ENCODE measurements at regions of chr2 and their contacts with region 1.

Region 1: GRCh38 chr2:54106631-54107454 is 8.6 kb upstream of the ACYP2 start:
- DNase-seq: no peak
- H3K4me3 ChIP-seq: no peak overlapping the region
- H3K27ac ChIP-seq: no peak overlapping the region
- H3K4me1 ChIP-seq: no peaks in the 10 kb centered on the region
- H3K27me3 ChIP-seq: no peaks in the 10 kb centered on the region
- CTCF ChIP-seq: peak in 3 of 4 experiments; percentile 32 to 66 (median 57)
- POLR2A ChIP-seq: no peak

Region 2: GRCh38 chr2:54710216-54710615 is 603.4 kb after region 1 on chr2:
- intact Hi-C with region 1: loop called (anchors 5 kb)
- DNase-seq: no peak
- H3K4me3 ChIP-seq: no peak overlapping the region
- H3K27ac ChIP-seq: no peak overlapping the region
- H3K4me1 ChIP-seq: no peaks in the 10 kb centered on the region
- H3K27me3 ChIP-seq: no peaks in the 10 kb centered on the region
- CTCF ChIP-seq: no peak
- POLR2A ChIP-seq: no peak

Region 3: GRCh38 chr2:54838585-54839035 is 731.8 kb after region 1 on chr2:
- intact Hi-C with region 1: loop called (anchors 10 kb)
- DNase-seq: peak; percentile 54
- H3K4me3 ChIP-seq: no peak overlapping the region
- H3K27ac ChIP-seq: no peak overlapping the region
- H3K4me1 ChIP-seq: peaks cover 6% of the 10 kb centered on the region
- H3K27me3 ChIP-seq: no peaks in the 10 kb centered on the region
- CTCF ChIP-seq: peak; percentile 63 to 85 (median 76)
- POLR2A ChIP-seq: no peak

Measured in prostate gland (tissue), 2 donors.